ENCODE measurements at regions of chr12 and their contacts with region 1.

Region 1: DNA sequence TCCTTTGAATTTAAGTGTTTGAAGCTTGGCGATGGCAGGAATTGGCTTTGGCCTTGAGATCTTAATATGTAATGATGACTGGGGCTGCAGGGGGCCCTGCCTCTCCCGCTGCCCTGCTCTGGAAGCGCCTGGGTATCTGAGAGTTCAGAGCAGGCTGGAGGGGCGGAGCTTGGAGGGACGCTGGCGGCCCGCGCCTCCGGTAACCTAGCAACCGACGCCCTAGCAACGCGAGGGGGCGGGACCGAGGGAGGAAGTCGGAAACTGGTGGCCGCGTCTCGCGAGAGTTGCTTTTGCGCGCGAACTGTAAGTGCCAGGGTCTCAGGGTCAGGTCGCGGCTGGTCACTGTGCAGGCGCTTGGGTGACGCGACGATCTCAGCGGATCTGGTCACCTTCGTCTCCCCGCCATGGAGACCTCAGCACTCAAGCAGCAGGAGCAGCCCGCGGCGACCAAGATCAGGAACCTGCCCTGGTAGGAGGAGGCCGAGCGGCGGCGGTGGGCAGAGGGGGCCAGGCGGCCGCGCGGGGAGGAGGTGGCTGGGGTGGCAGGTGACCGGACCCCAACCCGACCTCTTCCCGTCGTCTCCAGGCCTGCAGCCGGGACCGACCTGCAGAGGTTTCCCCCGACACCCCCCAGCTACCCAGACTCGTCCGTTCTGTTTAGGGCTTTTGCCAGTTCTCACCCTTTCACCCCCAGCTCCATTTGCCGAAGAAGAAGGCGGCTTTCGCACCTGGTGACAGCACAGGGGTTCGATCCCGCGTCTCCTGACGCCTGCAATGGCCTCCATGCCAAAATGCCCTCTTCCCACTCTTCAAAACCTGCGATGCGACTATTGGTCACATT is at the start of gene RFC5:
- DNase-seq: peak; percentile 98 to 99
- H3K4me3 ChIP-seq: peak within 1 kb of the TSS; percentile 84
- H3K4me3 Mint-ChIP-seq: peak within 1 kb of the TSS; percentile 90
- H3K27ac Mint-ChIP-seq: peak within 1 kb of the TSS; percentile 97
- H3K4me1 ChIP-seq: peaks cover 14% of the 10 kb centered on the region; the same call in 1 of the 2 replicates
- H3K4me1 Mint-ChIP-seq: peaks cover 7% of the 10 kb centered on the region
- H3K27me3 ChIP-seq: no peaks in the 10 kb centered on the region
- H3K27me3 Mint-ChIP-seq: peaks cover 3% of the 10 kb centered on the region
- CTCF ChIP-seq: no peak
- total RNA-seq, gene RFC5: 38.5 and 42.7 TPM in 2 replicates

Region 2: GRCh38 chr12:117874842-117875434 is 141.7 kb before region 1 on chr12:
- CTCF ChIA-PET with region 1: no interaction called
- POLR2A ChIA-PET with region 1: no interaction called
- intact Hi-C with region 1: loop called (anchors 5 kb)
- DNase-seq: peak; percentile 67 to 82
- H3K4me3 ChIP-seq: no peak overlapping the region
- H3K4me3 Mint-ChIP-seq: no peak overlapping the region
- H3K27ac Mint-ChIP-seq: no peak overlapping the region
- H3K4me1 ChIP-seq: no peaks in the 10 kb centered on the region
- H3K4me1 Mint-ChIP-seq: no peaks in the 10 kb centered on the region
- H3K27me3 ChIP-seq: no peaks in the 10 kb centered on the region
- H3K27me3 Mint-ChIP-seq: no peaks in the 10 kb centered on the region
- CTCF ChIP-seq: peak; percentile 82 to 96

Region 3: GRCh38 chr12:117968826-117969659 is 47.6 kb before region 1 on chr12 and contains the start of gene KSR2:
- CTCF ChIA-PET with region 1: interaction called, 5 read pairs
- POLR2A ChIA-PET with region 1: no interaction called
- intact Hi-C with region 1: loop called (anchors 5 kb)
- DNase-seq: peak; percentile 90
- H3K4me3 ChIP-seq: peak within 1 kb of the TSS; percentile 41
- H3K4me3 Mint-ChIP-seq: peak within 1 kb of the TSS; percentile 85
- H3K27ac Mint-ChIP-seq: peak within 1 kb of the TSS; percentile 85
- H3K4me1 ChIP-seq: no peaks in the 10 kb centered on the region
- H3K4me1 Mint-ChIP-seq: peaks cover 8% of the 10 kb centered on the region
- H3K27me3 ChIP-seq: no peaks in the 10 kb centered on the region; the same call in 1 of the 2 replicates
- H3K27me3 Mint-ChIP-seq: peaks cover 15% of the 10 kb centered on the region
- CTCF ChIP-seq: no peak
- total RNA-seq, gene KSR2: 0.42 and 0.66 TPM in 2 replicates

Region 4: DNA sequence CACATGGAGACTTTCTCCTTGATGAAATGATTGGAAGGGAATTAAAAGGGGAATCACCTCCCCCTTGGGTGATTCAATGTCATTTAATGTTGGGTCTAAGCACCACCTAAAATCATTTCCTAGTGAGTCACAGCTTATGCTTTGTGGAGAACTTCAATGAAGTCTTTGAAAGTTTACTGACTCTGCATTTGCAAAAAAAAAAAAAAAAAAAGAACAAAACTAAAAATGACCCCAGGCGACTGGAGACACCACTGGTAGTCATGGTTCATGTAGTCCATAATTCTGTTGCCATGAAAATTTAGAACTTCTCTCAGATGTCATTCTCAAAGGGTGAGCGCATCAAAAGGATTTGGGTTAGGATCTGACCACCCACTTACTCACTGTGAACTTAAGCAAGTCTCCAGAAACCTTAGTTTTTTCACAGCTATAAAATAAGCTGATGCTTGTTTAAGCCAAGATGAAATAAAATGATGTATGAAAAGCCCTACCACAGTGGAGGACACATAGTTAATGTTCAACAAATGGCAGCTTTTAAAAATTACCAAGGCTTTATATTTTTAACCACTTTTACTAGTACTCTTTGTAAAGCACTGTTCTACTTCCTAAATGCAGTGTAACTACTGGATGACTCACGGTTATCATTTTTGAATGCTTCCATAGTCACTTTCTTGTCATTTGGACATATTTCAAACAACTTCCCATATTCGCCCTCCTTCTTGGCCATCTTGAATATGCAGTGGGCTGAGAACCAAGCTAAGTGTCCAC is 29.8 kb before region 1 on chr12:
- CTCF ChIA-PET with region 1: no interaction called
- POLR2A ChIA-PET with region 1: interaction called, 10 read pairs
- intact Hi-C with region 1: no loop called
- DNase-seq: no peak
- H3K4me3 ChIP-seq: no peak overlapping the region
- H3K4me3 Mint-ChIP-seq: no peak overlapping the region
- H3K27ac Mint-ChIP-seq: no peak overlapping the region
- H3K4me1 ChIP-seq: no peaks in the 10 kb centered on the region
- H3K4me1 Mint-ChIP-seq: no peaks in the 10 kb centered on the region
- H3K27me3 ChIP-seq: no peaks in the 10 kb centered on the region
- H3K27me3 Mint-ChIP-seq: peaks cover 4% of the 10 kb centered on the region
- CTCF ChIP-seq: no peak

Region 5: GRCh38 chr12:118052324-118053070 is 35.9 kb after region 1 on chr12:
- CTCF ChIA-PET with region 1: no interaction called
- POLR2A ChIA-PET with region 1: no interaction called
- intact Hi-C with region 1: loop called (anchors 2 kb)
- DNase-seq: peak; percentile 83 to 92
- H3K4me3 ChIP-seq: no peak overlapping the region
- H3K4me3 Mint-ChIP-seq: peak overlapping the region; percentile 14
- H3K27ac Mint-ChIP-seq: peak overlapping the region; percentile 80
- H3K4me1 ChIP-seq: peaks cover 28% of the 10 kb centered on the region
- H3K4me1 Mint-ChIP-seq: peaks cover 20% of the 10 kb centered on the region
- H3K27me3 ChIP-seq: no peaks in the 10 kb centered on the region
- H3K27me3 Mint-ChIP-seq: no peaks in the 10 kb centered on the region
- CTCF ChIP-seq: no peak

Region 6: DNA sequence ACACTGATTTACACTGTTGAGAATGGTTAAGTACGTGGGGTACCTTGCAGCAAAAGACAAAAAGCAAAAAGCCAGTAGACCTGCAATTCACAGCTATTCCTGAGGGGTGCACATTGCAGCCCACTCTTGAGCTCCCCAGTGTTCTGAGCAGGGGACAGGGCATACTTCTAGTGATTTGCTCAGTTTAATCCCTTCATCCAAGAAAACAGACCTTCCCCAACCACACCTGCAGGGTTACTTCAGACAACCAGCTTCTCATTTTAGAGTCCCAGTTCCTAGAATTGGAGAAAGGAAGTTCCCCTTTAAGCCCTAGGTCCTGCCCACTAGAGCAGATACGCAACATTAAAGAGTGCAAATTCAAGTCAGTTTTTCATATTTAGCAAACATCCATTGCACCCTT is 48.0 kb after region 1 on chr12:
- CTCF ChIA-PET with region 1: no interaction called
- POLR2A ChIA-PET with region 1: no interaction called
- intact Hi-C with region 1: no loop called
- DNase-seq: peak in 1 of 2 experiments; percentile 18
- H3K4me3 ChIP-seq: no peak overlapping the region
- H3K4me3 Mint-ChIP-seq: peak overlapping the region; percentile 95
- H3K27ac Mint-ChIP-seq: peak overlapping the region; percentile 99
- H3K4me1 ChIP-seq: peaks cover 37% of the 10 kb centered on the region
- H3K4me1 Mint-ChIP-seq: peaks cover 33% of the 10 kb centered on the region
- H3K27me3 ChIP-seq: no peaks in the 10 kb centered on the region
- H3K27me3 Mint-ChIP-seq: no peaks in the 10 kb centered on the region
- CTCF ChIP-seq: peak; percentile 17 to 21